ENCODE measurements at regions of chr2 and their contacts with region 1.

Region 1: DNA sequence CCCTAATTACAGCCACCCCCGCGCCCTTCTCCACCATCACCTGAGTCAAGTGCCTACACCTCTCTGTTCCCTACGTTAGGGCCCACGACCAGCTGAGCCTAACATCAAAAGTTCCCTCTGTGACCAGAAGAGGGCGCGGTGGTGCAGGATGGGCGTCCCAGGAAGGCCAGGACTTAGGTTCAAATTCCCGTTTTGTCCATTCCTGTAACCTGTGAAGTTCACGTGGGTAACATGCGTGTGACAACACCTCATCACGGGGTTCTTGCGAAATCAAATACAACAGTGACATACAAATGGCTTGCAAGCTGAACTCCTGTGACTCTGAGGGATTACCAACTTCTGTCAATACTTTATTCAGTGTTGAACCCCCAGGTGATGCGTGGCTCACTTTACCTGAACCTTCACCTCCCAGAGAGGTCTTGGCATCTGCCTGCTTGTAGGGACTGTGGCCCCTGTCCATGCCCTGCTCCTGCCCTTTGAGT is 207.9 kb downstream of the ARL4C start:
- DNase-seq: peak; percentile 75
- ATAC-seq: no peak
- H3K4me3 Mint-ChIP-seq: no peak overlapping the region
- H3K27ac Mint-ChIP-seq: peak overlapping the region; percentile 97
- H3K4me1 Mint-ChIP-seq: peaks cover 78% of the 10 kb centered on the region
- H3K27me3 Mint-ChIP-seq: no peaks in the 10 kb centered on the region

Region 2: DNA sequence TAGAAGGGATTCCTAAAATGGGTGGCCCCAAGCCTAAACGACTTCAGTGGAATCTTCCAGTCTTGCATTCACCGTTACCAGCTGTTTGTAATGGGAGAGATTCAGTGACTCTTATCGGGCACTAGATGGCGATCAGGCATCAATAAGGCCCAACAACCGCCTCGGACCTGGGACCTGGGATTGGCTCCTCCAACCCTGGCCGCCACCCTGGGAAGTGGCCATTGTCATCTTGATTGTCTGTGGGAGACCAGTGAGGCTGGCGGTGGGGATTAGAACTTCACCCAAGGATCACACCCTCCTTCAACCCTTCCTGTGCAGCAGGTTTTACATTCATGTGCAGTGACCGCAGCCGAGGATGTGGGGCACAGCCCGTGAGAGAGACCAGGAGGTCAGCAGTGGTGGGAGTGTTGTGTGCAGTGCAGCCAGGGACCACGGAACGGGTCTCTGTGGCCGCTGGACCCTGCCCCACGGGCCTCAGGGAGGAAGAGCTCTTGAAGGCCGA is 153.2 kb before region 1 on chr2:
- CTCF ChIA-PET with region 1: interaction called, 32 read pairs
- POLR2A ChIA-PET with region 1: interaction called, 3 read pairs
- DNase-seq: peak; percentile 72
- ATAC-seq: peak; percentile 84
- H3K4me3 Mint-ChIP-seq: no peak overlapping the region
- H3K27ac Mint-ChIP-seq: no peak overlapping the region
- H3K4me1 Mint-ChIP-seq: peaks cover 22% of the 10 kb centered on the region
- H3K27me3 Mint-ChIP-seq: peaks cover 16% of the 10 kb centered on the region

Region 3: GRCh38 chr2:234300932-234301823 is 12.2 kb after region 1 on chr2:
- CTCF ChIA-PET with region 1: interaction called, 13 read pairs
- POLR2A ChIA-PET with region 1: interaction called, 10 read pairs
- DNase-seq: no peak
- ATAC-seq: peak; percentile 22
- H3K4me3 Mint-ChIP-seq: no peak overlapping the region
- H3K27ac Mint-ChIP-seq: peak overlapping the region; percentile 40
- H3K4me1 Mint-ChIP-seq: peaks cover 60% of the 10 kb centered on the region
- H3K27me3 Mint-ChIP-seq: no peaks in the 10 kb centered on the region

Region 4: GRCh38 chr2:234425619-234426603 is 136.9 kb after region 1 on chr2:
- CTCF ChIA-PET with region 1: interaction called, 16 read pairs
- POLR2A ChIA-PET with region 1: interaction called, 55 read pairs
- DNase-seq: peak; percentile 88
- ATAC-seq: peak; percentile 88
- H3K4me3 Mint-ChIP-seq: peak overlapping the region; percentile 56
- H3K27ac Mint-ChIP-seq: peak overlapping the region; percentile 97
- H3K4me1 Mint-ChIP-seq: peaks cover 87% of the 10 kb centered on the region
- H3K27me3 Mint-ChIP-seq: no peaks in the 10 kb centered on the region

Region 5: GRCh38 chr2:234463626-234464290 is 174.7 kb after region 1 on chr2:
- CTCF ChIA-PET with region 1: interaction called, 10 read pairs
- POLR2A ChIA-PET with region 1: interaction called, 4 read pairs
- DNase-seq: peak; percentile 76
- ATAC-seq: peak; percentile 85
- H3K4me3 Mint-ChIP-seq: peak overlapping the region; percentile 60
- H3K27ac Mint-ChIP-seq: peak overlapping the region; percentile 81
- H3K4me1 Mint-ChIP-seq: peaks cover 55% of the 10 kb centered on the region
- H3K27me3 Mint-ChIP-seq: no peaks in the 10 kb centered on the region

Region 6: GRCh38 chr2:234500394-234501006 is 211.5 kb after region 1 on chr2:
- CTCF ChIA-PET with region 1: interaction called, 23 read pairs
- POLR2A ChIA-PET with region 1: interaction called, 189 read pairs
- DNase-seq: peak; percentile 84
- ATAC-seq: peak; percentile 40
- H3K4me3 Mint-ChIP-seq: no peak overlapping the region
- H3K27ac Mint-ChIP-seq: no peak overlapping the region
- H3K4me1 Mint-ChIP-seq: peaks cover 31% of the 10 kb centered on the region
- H3K27me3 Mint-ChIP-seq: peaks cover 16% of the 10 kb centered on the region